B cell (primary cell): ENCODE measurements at regions of chr6 and their contacts with region 1.

Region 1: DNA sequence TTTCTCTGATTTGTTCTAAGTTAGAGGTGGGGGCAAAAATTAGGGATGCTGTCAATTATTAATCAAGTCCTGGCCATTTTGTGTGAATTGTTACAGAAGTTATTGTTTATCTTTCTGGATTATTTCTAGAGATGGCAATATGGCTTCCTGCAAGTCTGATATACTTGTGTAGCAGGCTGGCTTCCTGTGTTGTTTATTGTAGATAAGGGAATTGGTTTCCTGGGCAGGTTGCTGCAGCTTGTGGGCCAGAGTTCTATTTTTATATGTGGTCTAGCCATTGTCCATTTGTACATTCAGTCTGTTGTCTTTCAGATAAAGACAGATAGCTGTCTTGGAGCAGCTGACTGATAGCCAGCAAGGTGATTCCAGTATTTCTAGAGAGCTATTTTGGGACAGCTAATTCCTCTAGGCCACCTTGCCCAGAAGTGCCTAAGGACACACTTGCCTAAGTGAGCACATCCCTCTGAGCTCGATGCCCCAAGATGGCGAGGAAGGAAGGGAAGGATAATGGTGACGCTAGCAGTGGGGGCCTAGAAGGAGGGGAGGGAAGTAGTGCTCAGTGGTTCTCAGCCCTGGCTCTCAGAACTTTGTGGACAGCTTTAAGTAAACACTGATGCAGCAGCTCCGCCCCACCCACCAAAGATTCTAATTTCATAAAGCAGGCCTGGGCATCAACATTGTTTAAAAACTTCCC is 25.5 kb downstream of the DDO start:
- DNase-seq: no peak
- ATAC-seq: no peak
- H3K4me3 ChIP-seq: no peak overlapping the region
- H3K4me3 Mint-ChIP-seq: no peak overlapping the region
- H3K27ac ChIP-seq: no peak overlapping the region
- H3K27ac Mint-ChIP-seq: no peak overlapping the region
- H3K4me1 ChIP-seq: no peaks in the 10 kb centered on the region
- H3K4me1 Mint-ChIP-seq: no peaks in the 10 kb centered on the region
- H3K27me3 ChIP-seq: no peaks in the 10 kb centered on the region
- H3K27me3 Mint-ChIP-seq: no peaks in the 10 kb centered on the region
- CTCF ChIP-seq: no peak

Region 2: DNA sequence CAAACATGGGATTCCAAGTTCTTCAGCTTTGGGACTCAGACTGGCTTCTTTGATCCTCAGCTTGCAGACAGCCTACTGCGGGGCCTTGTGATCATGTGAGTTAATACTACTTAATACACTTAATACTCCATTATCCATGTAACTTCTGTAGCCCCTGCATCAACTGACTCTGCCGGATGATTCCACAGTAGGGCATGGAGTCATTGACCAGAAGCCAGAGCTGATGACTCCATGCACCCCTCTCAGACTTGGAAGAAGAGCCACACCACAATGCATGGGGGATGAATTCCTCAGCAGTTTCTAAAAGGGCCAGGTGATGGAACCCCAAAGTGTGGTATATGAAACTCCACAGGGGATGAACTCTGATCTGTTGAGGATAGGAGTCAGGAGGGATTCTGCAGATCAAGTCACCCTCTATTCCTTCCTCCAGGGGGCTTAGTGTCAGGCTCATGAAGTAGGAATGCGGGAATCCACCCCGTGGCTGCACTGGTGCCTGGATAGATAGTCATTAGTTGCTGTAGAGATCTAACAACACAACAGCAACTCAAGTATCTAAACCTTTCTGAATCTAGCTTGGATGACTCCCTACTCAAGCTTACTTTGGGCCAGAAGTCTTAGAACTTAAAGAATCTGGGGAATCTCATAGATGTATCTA is 341.5 kb before region 1 on chr6:
- CTCF ChIA-PET with region 1: interaction called, 12 read pairs
- POLR2A ChIA-PET with region 1: no interaction called
- intact Hi-C with region 1: no loop called
- DNase-seq: no peak
- ATAC-seq: no peak
- H3K4me3 ChIP-seq: no peak overlapping the region
- H3K4me3 Mint-ChIP-seq: no peak overlapping the region
- H3K27ac ChIP-seq: no peak overlapping the region
- H3K27ac Mint-ChIP-seq: no peak overlapping the region
- H3K4me1 ChIP-seq: peaks cover 4 to 9% of the 10 kb centered on the region in 2 donors
- H3K4me1 Mint-ChIP-seq: peaks cover 7% of the 10 kb centered on the region
- H3K27me3 ChIP-seq: no peaks in the 10 kb centered on the region
- H3K27me3 Mint-ChIP-seq: peaks cover 7% of the 10 kb centered on the region
- CTCF ChIP-seq: no peak